ENCODE measurements at regions of chr15 and their contacts with region 1.

Region 1: GRCh38 chr15:75809986-75810750 is 33.1 kb upstream of the UBE2Q2 start:
- DNase-seq: peak; percentile 19
- H3K4me3 ChIP-seq: no peak overlapping the region
- H3K27ac ChIP-seq: no peak overlapping the region
- H3K4me1 ChIP-seq: no peaks in the 10 kb centered on the region
- CTCF ChIP-seq: peak; percentile 70

Region 2: GRCh38 chr15:75928680-75929608 is 118.8 kb after region 1 on chr15:
- CTCF ChIA-PET with region 1: no interaction called
- POLR2A ChIA-PET with region 1: no interaction called
- intact Hi-C with region 1: loop called (anchors 2 kb)
- DNase-seq: peak; percentile 63
- H3K4me3 ChIP-seq: no peak overlapping the region
- H3K27ac ChIP-seq: no peak overlapping the region
- H3K4me1 ChIP-seq: peaks cover 6% of the 10 kb centered on the region
- CTCF ChIP-seq: peak; percentile 83

Region 3: DNA sequence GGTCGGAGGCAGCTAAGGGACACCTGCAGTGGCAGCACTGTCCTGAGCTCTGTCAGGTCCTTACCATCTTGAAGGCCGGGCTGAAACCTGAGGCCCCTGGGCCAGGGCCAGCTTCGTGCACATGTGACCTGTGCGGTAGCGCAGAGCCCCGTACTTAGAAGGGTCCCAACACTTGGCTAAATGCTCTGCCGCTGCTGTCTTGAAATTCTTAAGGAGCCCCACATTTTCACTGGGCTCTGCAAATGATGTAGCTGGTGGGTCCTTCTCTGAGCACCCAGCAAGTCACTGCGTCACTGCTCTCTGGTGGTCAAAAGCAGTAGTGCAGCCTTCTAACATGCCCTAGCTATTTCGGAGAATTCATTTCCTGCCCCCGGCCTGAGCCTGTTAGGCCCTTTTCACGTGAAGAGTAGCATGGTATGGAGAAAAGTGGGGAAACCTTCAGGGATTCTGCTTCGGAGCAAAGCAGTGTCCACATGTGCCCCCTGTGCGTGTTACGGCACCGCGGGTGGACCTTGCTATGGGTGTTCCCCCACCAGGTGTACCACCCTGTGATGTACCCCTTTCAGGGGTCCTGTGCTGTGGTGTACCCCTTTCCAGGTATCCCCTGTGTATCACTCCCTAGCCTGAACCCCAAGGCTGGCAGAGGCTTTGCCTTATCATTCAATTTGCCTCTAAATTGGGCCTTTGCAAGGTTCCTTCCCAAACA is 329.4 kb after region 1 on chr15:
- CTCF ChIA-PET with region 1: no interaction called
- POLR2A ChIA-PET with region 1: no interaction called
- intact Hi-C with region 1: loop called (anchors 1 kb)
- DNase-seq: peak; percentile 67
- H3K4me3 ChIP-seq: no peak overlapping the region
- H3K27ac ChIP-seq: no peak overlapping the region
- H3K4me1 ChIP-seq: no peaks in the 10 kb centered on the region
- CTCF ChIP-seq: peak; percentile 89